GM13976 (cell line): ENCODE measurements at regions of chr11 and their contacts with region 1.

Region 1: DNA sequence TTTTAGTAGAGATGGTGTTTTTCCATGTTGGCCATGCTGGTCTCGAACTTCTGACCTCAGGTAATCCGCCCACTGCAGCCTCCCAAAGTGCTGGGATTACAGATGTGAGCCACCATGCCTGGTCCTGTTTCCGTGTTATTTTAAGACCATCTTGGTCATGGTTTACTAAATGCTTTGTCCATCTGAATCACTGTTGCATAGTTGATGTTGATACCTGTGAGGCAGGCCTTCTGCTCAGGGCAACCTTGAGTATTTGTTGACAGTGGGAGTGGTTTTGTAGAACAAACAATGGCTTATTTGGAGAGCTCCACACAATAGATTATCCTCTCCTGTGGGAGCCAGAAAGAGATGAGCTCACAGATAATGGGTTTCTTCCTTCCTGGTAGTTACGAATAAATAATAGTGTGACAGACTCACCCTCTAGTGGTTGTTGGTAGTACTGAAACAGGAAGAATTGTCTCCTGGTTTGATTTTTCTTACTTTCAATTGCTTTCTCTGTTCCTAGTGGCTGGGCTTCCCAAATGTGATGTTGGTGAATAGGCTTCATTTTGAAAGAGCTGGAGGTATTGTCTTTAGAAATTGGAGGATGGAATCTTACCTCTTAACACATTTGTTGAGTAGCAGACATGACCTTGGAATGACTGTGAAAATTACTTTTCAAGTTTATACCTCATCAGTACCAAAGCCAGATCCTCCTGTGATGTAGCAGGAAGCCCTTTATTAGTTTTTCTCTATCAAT is 39.0 kb downstream of the CTNND1 start:
- DNase-seq: peak; percentile 76
- CTCF ChIP-seq: peak; percentile 76

Region 2: GRCh38 chr11:57667736-57668435 is 132.7 kb before region 1 on chr11 and contains the start of gene ZDHHC5:
- in situ Hi-C with region 1: loop called (anchors 25 kb)
- DNase-seq: peak; percentile 98
- CTCF ChIP-seq: peak; percentile 43

Region 3: DNA sequence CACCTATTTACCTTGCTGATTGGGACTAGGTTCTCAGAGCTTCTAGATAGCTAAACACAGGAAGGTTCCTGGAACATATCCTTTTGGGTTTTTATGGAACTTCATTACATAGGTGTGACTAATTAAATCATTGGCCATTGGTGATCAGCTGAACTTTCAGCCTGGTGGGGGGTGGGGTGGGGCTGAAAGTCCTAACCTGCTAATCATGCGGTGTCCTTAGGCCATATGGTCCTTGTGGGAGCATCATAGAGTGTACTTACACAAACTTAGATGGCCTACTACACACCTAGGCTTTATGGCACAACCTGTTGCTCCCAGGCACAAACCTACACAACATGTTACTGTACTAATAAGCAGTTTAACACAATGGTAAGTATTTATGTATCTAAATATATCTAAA is 68.0 kb before region 1 on chr11:
- in situ Hi-C with region 1: no loop called
- DNase-seq: no peak
- CTCF ChIP-seq: no peak

Region 4: GRCh38 chr11:57761301-57762234 is 39.0 kb before region 1 on chr11 and contains the start of gene CTNND1:
- in situ Hi-C with region 1: loop called (anchors 5 kb)
- DNase-seq: peak; percentile 87
- CTCF ChIP-seq: no peak

Region 5: GRCh38 chr11:58524232-58525036 is 723.8 kb after region 1 on chr11:
- in situ Hi-C with region 1: loop called (anchors 25 kb)
- DNase-seq: peak; percentile 35
- CTCF ChIP-seq: peak; percentile 70